CD4-positive, alpha-beta T cell (primary cell): ENCODE measurements at regions of chr20 and their contacts with region 1.

Region 1: DNA sequence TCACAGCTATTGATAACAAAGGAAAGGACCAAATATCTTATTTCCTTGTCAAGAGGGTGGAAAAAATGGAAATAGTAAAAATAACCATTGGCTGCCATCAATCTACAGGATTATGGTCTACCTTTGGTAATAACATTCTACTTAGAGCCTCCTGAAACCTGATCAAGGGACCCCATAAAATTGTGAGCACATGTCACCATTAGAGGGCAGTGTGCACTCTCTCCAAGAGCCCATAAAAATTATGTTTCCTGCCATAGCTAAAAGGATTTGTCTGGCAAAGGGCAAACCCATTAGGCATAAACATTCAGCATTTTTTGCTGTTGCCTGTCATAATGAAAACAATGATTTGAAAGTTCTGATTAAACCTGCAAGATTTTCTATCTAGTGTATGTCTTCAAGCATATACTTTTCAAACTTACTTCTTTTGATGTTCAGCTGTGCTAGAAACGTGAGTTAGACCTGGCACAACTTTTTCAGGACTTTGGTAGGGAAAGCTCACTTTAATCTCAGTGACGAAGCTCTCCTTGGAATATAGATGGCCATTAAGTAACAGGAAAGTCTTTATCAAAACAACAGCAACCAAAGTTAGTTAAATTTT is 120.7 kb upstream of the ZFP64 start:
- DNase-seq: peak in 13 of 14 experiments; percentile 20 to 83 (median 47)
- ATAC-seq: peak; percentile 73
- H3K4me3 ChIP-seq: no peak overlapping the region
- H3K4me3 Mint-ChIP-seq: no peak overlapping the region
- H3K27ac ChIP-seq: no peak overlapping the region
- H3K27ac Mint-ChIP-seq: no peak overlapping the region
- H3K4me1 ChIP-seq: peaks cover 4% of the 10 kb centered on the region
- H3K4me1 Mint-ChIP-seq: peaks cover 38% of the 10 kb centered on the region
- H3K27me3 ChIP-seq: no peaks in the 10 kb centered on the region
- H3K27me3 Mint-ChIP-seq: no peaks in the 10 kb centered on the region
- CTCF ChIP-seq: peak; percentile 88

Region 2: DNA sequence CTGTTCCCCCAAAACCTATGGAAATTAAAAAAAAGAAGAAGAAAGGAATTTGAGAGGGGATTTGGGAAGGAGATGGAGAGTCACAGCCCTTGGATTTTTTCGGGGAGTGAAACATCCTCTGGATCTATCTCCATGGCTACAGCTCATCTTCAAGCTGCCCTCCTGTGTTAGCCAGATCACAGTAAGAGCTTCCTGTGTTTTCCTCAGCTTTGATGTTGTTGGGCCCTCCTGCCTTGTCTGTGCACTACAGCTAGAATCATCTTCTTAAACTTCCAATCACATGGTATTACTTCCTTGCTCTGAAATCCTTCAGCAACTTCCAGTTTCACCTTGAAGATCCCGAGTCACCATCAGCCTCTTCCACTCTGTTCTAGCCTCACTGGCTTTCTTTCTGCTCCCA is 87.1 kb after region 1 on chr20:
- CTCF ChIA-PET with region 1: no interaction called
- POLR2A ChIA-PET with region 1: no interaction called
- intact Hi-C with region 1: no loop called
- DNase-seq: peak in 4 of 14 experiments; percentile 21 to 35 (median 24)
- ATAC-seq: peak; percentile 64
- H3K4me3 ChIP-seq: no peak overlapping the region
- H3K4me3 Mint-ChIP-seq: peak overlapping the region; percentile 40
- H3K27ac ChIP-seq: no peak overlapping the region
- H3K27ac Mint-ChIP-seq: peak overlapping the region; percentile 38
- H3K4me1 ChIP-seq: peaks cover 24% of the 10 kb centered on the region
- H3K4me1 Mint-ChIP-seq: peaks cover 44% of the 10 kb centered on the region
- H3K27me3 ChIP-seq: no peaks in the 10 kb centered on the region
- H3K27me3 Mint-ChIP-seq: no peaks in the 10 kb centered on the region
- CTCF ChIP-seq: no peak

Region 3: DNA sequence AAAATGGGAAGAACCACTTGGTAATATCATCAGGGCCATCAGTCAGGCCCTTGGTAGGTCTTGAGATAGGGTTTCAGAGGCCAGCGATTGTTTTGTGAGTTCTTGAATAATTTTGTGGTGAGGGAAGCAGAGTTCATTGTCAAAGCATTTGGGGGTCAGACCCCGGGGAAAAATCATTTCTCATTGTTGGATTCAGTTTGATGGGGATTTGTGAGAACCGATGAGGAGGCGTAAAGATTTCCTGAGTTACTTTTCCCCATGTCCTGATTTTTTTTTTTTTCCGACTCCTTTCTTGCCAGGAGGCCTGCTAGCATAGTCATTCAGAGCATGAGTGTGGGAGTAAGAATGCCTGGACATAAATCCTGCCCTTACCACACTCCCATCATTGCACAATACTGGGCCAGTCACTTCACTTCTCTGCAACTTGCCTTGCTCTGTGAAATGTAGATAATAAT is 720.3 kb after region 1 on chr20:
- CTCF ChIA-PET with region 1: no interaction called
- POLR2A ChIA-PET with region 1: no interaction called
- intact Hi-C with region 1: loop called (anchors 2 to 5 kb)
- DNase-seq: no peak
- ATAC-seq: no peak
- H3K4me3 ChIP-seq: no peak overlapping the region
- H3K4me3 Mint-ChIP-seq: no peak overlapping the region
- H3K27ac ChIP-seq: no peak overlapping the region
- H3K27ac Mint-ChIP-seq: no peak overlapping the region
- H3K4me1 ChIP-seq: peaks cover 5% of the 10 kb centered on the region
- H3K4me1 Mint-ChIP-seq: peaks cover 50% of the 10 kb centered on the region
- H3K27me3 ChIP-seq: no peaks in the 10 kb centered on the region
- H3K27me3 Mint-ChIP-seq: no peaks in the 10 kb centered on the region
- CTCF ChIP-seq: no peak